ENCODE measurements at regions of chr11 and their contacts with region 1.

Region 1: GRCh38 chr11:9757809-9758636 is 94.1 kb downstream of the SWAP70 start:
- DNase-seq: peak; percentile 80 to 96 (median 92)
- ATAC-seq: peak; percentile 81
- H3K4me3 ChIP-seq: peak overlapping the region; percentile 83 to 91
- H3K4me3 Mint-ChIP-seq: peak overlapping the region; percentile 83
- H3K27ac ChIP-seq: peak overlapping the region; percentile 36 to 42
- H3K27ac Mint-ChIP-seq: peak overlapping the region; percentile 90
- H3K4me1 ChIP-seq: peaks cover 12% of the 10 kb centered on the region
- H3K4me1 Mint-ChIP-seq: peaks cover 24% of the 10 kb centered on the region
- H3K27me3 ChIP-seq: no peaks in the 10 kb centered on the region
- H3K27me3 Mint-ChIP-seq: no peaks in the 10 kb centered on the region
- CTCF ChIP-seq: peak; percentile 84

Region 2: GRCh38 chr11:8682303-8683114 is 1075.5 kb before region 1 on chr11 and contains the starts of genes RPL27A and TRIM66:
- CTCF ChIA-PET with region 1: no interaction called
- POLR2A ChIA-PET with region 1: no interaction called
- intact Hi-C with region 1: loop called in 1 of 2 experiments (anchors 5 kb)
- DNase-seq: peak; percentile 98 to 100 (median 99)
- ATAC-seq: peak; percentile 92
- H3K4me3 ChIP-seq: peak within 1 kb of the TSS; percentile 63 to 99
- H3K4me3 Mint-ChIP-seq: peak within 1 kb of the TSS; percentile 96
- H3K27ac ChIP-seq: peak within 1 kb of the TSS; percentile 82 to 92
- H3K27ac Mint-ChIP-seq: peak within 1 kb of the TSS; percentile 98
- H3K4me1 ChIP-seq: peaks cover 27% of the 10 kb centered on the region
- H3K4me1 Mint-ChIP-seq: peaks cover 48% of the 10 kb centered on the region
- H3K27me3 ChIP-seq: no peaks in the 10 kb centered on the region
- H3K27me3 Mint-ChIP-seq: no peaks in the 10 kb centered on the region
- CTCF ChIP-seq: no peak
- total RNA-seq, gene RPL27A: 1,595 to 1,676 TPM
- total RNA-seq, gene TRIM66: 8.6 to 9.1 TPM

Region 3: GRCh38 chr11:9534791-9535781 is 222.9 kb before region 1 on chr11:
- CTCF ChIA-PET with region 1: interaction called, 13 read pairs
- POLR2A ChIA-PET with region 1: no interaction called
- intact Hi-C with region 1: no loop called
- DNase-seq: peak; percentile 53 to 87 (median 79)
- ATAC-seq: peak; percentile 61
- H3K4me3 ChIP-seq: no peak overlapping the region
- H3K4me3 Mint-ChIP-seq: no peak overlapping the region
- H3K27ac ChIP-seq: no peak overlapping the region
- H3K27ac Mint-ChIP-seq: no peak overlapping the region
- H3K4me1 ChIP-seq: no peaks in the 10 kb centered on the region
- H3K4me1 Mint-ChIP-seq: no peaks in the 10 kb centered on the region
- H3K27me3 ChIP-seq: no peaks in the 10 kb centered on the region
- H3K27me3 Mint-ChIP-seq: no peaks in the 10 kb centered on the region
- CTCF ChIP-seq: peak; percentile 75

Region 4: GRCh38 chr11:9663699-9664275 is 94.2 kb before region 1 on chr11 and contains the start of gene SWAP70:
- CTCF ChIA-PET with region 1: no interaction called
- POLR2A ChIA-PET with region 1: no interaction called
- intact Hi-C with region 1: loop called in 1 of 2 experiments (anchors 5 kb)
- DNase-seq: peak; percentile 47 to 82 (median 74)
- ATAC-seq: peak; percentile 90
- H3K4me3 ChIP-seq: peak within 1 kb of the TSS; percentile 78 to 80
- H3K4me3 Mint-ChIP-seq: peak within 1 kb of the TSS; percentile 88
- H3K27ac ChIP-seq: peak within 1 kb of the TSS in 1 of 2 experiments; percentile 11
- H3K27ac Mint-ChIP-seq: peak within 1 kb of the TSS; percentile 75
- H3K4me1 ChIP-seq: peaks cover 11% of the 10 kb centered on the region
- H3K4me1 Mint-ChIP-seq: peaks cover 19% of the 10 kb centered on the region
- H3K27me3 ChIP-seq: peaks cover 0 to 3% of the 10 kb centered on the region in 2 experiments
- H3K27me3 Mint-ChIP-seq: peaks cover 28% of the 10 kb centered on the region
- CTCF ChIP-seq: no peak
- total RNA-seq, gene SWAP70: 4.2 to 4.6 TPM

Region 5: DNA sequence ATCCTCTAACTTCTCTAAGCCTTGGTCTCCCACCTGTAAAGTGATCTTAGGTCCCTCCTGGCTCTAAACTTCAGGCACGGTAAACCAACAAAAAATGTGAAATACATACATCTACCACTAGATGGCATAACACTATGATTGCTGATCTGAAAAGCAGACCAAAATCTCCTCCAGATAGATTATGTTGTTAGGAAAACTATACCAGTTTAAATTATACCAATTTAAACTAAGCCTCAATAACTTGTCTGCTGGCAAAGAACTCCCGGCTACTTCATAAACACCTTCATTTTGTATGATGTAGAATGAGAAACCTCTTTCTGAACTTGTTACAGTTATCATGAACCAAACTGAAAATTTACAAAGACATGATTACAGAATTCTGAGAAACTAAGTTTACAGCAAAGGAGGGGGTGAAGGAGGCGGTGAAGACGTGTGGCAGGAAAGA is 450.1 kb after region 1 on chr11:
- CTCF ChIA-PET with region 1: interaction called, 3 read pairs
- POLR2A ChIA-PET with region 1: no interaction called
- intact Hi-C with region 1: loop called (anchors 2 to 5 kb)
- DNase-seq: peak in 2 of 9 experiments; percentile 58 to 70
- ATAC-seq: peak; percentile 67
- H3K4me3 ChIP-seq: no peak overlapping the region
- H3K4me3 Mint-ChIP-seq: no peak overlapping the region
- H3K27ac ChIP-seq: no peak overlapping the region
- H3K27ac Mint-ChIP-seq: no peak overlapping the region
- H3K4me1 ChIP-seq: no peaks in the 10 kb centered on the region
- H3K4me1 Mint-ChIP-seq: no peaks in the 10 kb centered on the region
- H3K27me3 ChIP-seq: no peaks in the 10 kb centered on the region
- H3K27me3 Mint-ChIP-seq: no peaks in the 10 kb centered on the region
- CTCF ChIP-seq: peak; percentile 72

Region 6: GRCh38 chr11:10735481-10736475 is 977.8 kb after region 1 on chr11:
- CTCF ChIA-PET with region 1: no interaction called
- POLR2A ChIA-PET with region 1: no interaction called
- intact Hi-C with region 1: loop called (anchors 5 kb)
- DNase-seq: peak; percentile 73 to 91 (median 85)
- ATAC-seq: peak; percentile 99
- H3K4me3 ChIP-seq: peak overlapping the region; percentile 3 to 20
- H3K4me3 Mint-ChIP-seq: peak overlapping the region; percentile 56
- H3K27ac ChIP-seq: no peak overlapping the region
- H3K27ac Mint-ChIP-seq: no peak overlapping the region
- H3K4me1 ChIP-seq: peaks cover 9% of the 10 kb centered on the region
- H3K4me1 Mint-ChIP-seq: peaks cover 13% of the 10 kb centered on the region
- H3K27me3 ChIP-seq: no peaks in the 10 kb centered on the region
- H3K27me3 Mint-ChIP-seq: no peaks in the 10 kb centered on the region
- CTCF ChIP-seq: peak; percentile 96